ENCODE measurements at regions of chr17 and their contacts with region 1.

Region 1: DNA sequence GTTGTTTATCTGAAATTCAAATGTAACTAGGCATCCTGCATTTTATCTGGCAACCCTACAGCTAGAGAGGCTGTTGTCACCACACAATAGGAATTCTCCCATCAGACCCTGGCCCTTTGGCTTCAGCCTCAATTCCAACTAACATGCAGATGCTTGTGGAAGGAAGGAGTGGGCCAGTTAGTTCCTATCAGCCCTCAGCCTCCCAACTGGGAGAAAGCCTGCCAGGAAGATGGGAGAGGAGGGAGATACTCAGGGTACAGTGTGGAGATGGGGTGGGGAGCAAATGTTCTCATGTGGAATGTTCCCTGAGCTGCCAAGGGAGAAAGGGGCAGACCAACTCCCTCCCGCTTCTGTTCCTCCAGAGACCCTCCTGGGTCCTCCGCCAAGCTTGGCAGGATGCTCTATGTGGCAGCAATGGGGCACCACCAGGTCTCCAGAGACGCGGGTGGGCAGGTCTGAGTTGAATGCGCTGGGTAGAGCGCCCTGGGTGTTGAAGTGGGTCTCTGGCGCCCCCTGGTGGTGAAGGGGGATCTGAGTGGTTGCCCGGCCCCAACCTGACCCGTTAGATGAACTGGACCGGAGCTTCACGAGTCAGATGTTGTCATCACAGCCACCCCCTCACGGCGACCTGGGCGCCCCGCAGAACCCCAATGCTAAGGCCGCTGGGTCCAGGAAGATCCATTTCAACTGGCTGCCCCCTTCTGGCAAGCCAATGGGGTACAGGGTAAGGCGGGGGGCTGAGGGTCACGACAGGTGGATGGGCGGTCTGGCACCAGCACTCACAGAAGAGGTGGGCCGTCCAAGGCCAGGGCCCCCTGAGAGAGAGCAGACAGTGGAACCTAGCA is 15.2 kb downstream of the GALK1 start:
- DNase-seq: peak; percentile 92
- H3K4me3 ChIP-seq: no peak overlapping the region
- H3K27ac ChIP-seq: no peak overlapping the region
- H3K4me1 ChIP-seq: peaks cover 45% of the 10 kb centered on the region
- CTCF ChIP-seq: peak; percentile 100

Region 2: DNA sequence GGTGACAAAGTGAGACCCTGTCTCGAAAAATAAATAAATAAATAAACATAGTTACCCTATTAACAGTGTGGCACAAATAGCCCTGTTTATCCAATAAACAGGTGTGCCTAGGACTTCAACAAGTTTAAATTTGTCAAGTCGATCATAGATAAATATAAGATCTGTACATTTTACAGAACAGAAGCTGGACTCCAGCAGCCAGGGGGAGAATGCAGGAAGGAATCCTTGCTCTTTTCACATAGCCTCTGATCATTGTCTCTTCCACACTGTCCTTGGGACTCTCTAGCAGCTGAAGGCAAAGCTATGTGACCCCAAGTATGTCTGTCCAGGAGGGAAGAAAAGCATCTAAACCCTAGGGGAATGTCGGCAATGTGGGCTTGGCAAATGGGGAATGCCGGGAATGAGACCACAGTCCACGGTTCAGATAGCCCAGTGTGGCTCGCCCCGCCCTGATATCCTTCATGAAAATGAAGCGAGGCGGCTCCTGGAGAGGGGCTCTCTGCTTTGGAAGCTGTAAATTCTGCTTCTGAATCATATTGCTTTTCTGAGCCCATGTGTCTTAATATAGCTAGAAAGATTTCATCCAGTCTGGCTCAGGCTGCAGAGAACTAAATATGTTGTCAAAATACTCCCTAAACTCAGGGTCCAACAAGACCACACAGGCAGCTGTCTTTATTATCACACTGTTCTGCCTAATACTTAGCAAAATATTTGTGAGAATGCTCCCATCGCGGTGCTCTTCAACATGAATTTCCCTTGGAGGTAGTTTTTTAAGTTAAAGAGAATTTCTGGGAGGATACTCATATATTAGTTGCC is 319.4 kb before region 1 on chr17:
- CTCF ChIA-PET with region 1: no interaction called
- POLR2A ChIA-PET with region 1: no interaction called
- intact Hi-C with region 1: loop called (anchors 5 kb)
- DNase-seq: no peak
- H3K4me3 ChIP-seq: no peak overlapping the region
- H3K27ac ChIP-seq: no peak overlapping the region
- H3K4me1 ChIP-seq: peaks cover 7% of the 10 kb centered on the region
- CTCF ChIP-seq: no peak

Region 3: GRCh38 chr17:75589012-75589918 is 160.5 kb before region 1 on chr17:
- CTCF ChIA-PET with region 1: no interaction called
- POLR2A ChIA-PET with region 1: no interaction called
- intact Hi-C with region 1: loop called (anchors 1 kb)
- DNase-seq: peak; percentile 98
- H3K4me3 ChIP-seq: peak overlapping the region; percentile 67
- H3K27ac ChIP-seq: no peak overlapping the region
- H3K4me1 ChIP-seq: peaks cover 25% of the 10 kb centered on the region
- CTCF ChIP-seq: peak; percentile 77

Region 4: GRCh38 chr17:75619506-75620431 is 130.0 kb before region 1 on chr17:
- CTCF ChIA-PET with region 1: interaction called, 6 read pairs
- POLR2A ChIA-PET with region 1: no interaction called
- intact Hi-C with region 1: loop called (anchors 1 kb)
- DNase-seq: peak; percentile 33
- H3K4me3 ChIP-seq: no peak overlapping the region
- H3K27ac ChIP-seq: no peak overlapping the region
- H3K4me1 ChIP-seq: no peaks in the 10 kb centered on the region
- CTCF ChIP-seq: peak; percentile 77

Region 5: DNA sequence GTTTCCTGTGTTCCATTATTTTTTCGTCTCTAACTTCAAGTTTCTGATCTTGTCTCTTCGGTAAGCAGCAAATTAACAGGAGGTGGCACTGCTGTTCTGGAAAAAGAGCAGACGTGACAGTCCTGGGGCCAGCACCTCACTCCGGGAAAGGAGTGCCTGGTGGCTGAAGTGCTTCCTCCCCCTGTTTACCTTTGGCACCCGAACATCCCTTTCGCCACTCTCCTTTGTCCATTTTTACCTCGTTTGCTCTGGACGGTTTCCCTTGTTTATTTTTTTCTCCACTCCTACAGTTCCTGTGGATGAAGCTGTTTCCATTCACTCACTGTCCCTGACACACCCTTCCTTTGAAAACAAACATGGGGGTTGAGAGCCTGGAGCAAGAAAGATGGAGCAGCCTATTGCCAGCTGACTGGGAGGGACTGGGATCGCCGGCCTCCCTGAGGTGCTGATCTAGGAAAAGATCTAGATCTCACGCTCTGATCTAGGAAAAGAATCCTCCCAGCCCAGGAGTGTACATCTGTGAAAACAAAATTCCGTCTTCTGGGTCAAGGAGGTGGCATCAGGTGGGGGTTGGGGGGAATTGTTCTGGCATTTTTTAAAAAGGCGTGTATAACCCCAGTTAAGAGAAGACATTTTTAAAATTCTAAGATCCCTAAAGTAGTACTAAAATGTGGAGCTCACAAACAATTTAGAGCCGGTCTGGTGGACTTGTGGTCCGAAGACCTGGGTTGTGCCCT is 69.9 kb before region 1 on chr17:
- CTCF ChIA-PET with region 1: interaction called, 5 read pairs
- POLR2A ChIA-PET with region 1: interaction called, 4 read pairs
- intact Hi-C with region 1: loop called (anchors 1 kb)
- DNase-seq: no peak
- H3K4me3 ChIP-seq: no peak overlapping the region
- H3K27ac ChIP-seq: no peak overlapping the region
- H3K4me1 ChIP-seq: peaks cover 5% of the 10 kb centered on the region
- CTCF ChIP-seq: peak; percentile 38; the same call in 1 of the 2 replicates

Region 6: DNA sequence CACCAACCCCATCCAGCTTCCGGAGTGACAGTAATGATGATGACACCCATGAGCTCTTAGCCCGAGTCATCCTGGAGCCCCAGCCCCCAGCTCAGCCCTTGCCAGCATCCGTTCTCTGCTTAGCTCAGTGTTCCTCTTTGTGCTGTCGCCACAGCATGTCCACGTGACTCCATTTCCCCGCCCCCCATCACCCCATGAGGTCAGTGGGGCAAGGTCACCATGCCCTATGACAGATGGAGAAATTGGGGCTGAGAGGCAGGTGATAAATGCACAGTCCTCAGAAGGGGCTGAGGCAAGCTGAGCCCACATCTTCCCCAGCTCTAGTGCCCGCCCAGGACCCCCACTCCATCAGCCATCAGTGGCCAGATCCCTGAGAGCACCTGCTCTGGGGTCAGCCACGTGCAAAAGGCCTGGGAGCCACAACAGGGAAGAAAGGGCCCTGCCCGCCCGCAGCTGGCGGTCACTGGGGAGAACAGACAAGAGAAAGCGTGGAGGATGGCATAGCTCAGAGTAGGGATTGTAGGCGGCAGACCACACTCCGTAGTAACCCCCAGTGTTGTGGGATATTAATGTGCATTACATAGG is 11.5 kb before region 1 on chr17:
- CTCF ChIA-PET with region 1: interaction called, 19 read pairs
- POLR2A ChIA-PET with region 1: interaction called, 13 read pairs
- intact Hi-C with region 1: no loop called
- DNase-seq: peak; percentile 80
- H3K4me3 ChIP-seq: peak overlapping the region; percentile 20
- H3K27ac ChIP-seq: peak overlapping the region; percentile 15
- H3K4me1 ChIP-seq: peaks cover 23% of the 10 kb centered on the region
- CTCF ChIP-seq: no peak

Region 7: DNA sequence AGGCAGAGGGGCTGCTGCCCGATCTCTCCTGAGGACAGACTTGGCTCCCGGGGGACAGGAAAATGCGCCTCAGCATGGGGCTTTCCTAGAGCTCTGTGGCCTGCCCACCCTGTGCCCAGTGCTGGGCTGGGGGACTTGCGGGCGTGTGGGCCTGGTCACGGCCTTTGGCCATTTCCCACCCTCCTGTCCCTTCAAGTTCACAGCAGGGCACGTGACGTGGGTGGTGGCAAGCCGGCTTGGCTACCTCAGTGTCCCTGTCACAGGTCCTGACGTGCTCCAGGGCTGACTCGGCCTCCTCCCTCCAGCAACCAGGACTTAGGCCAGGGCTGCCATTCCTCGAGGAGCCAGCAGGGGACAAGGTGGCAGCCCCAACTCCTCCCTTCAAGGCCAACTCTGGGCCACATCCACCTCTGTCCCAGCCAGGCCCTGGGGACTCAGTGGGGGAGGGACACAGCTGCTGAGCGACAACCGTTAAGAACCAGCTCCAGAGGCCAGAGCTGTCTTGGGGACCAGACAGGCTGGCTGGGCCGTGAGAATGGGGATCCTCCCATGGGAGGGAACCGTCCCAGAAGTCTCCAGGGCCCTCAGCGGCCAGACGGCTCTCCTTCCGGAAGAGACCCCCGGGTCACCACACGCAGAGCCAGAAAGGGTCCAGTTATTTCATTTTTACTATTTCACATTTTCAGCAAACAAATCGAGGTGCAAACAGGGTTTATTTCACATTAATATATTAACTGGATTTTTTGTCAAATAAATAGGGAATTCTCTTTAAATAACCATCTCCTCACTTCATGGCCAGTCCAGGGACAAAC is 95.5 kb after region 1 on chr17:
- CTCF ChIA-PET with region 1: no interaction called
- POLR2A ChIA-PET with region 1: no interaction called
- intact Hi-C with region 1: loop called (anchors 5 kb)
- DNase-seq: peak; percentile 82
- H3K4me3 ChIP-seq: no peak overlapping the region
- H3K27ac ChIP-seq: no peak overlapping the region
- H3K4me1 ChIP-seq: peaks cover 24% of the 10 kb centered on the region
- CTCF ChIP-seq: peak; percentile 82

Measured in OCI-LY7 (cell line).